Left cardiac atrium (tissue), 4 donors: ENCODE measurements at regions of chr11 and their contacts with region 1.

Region 1: DNA sequence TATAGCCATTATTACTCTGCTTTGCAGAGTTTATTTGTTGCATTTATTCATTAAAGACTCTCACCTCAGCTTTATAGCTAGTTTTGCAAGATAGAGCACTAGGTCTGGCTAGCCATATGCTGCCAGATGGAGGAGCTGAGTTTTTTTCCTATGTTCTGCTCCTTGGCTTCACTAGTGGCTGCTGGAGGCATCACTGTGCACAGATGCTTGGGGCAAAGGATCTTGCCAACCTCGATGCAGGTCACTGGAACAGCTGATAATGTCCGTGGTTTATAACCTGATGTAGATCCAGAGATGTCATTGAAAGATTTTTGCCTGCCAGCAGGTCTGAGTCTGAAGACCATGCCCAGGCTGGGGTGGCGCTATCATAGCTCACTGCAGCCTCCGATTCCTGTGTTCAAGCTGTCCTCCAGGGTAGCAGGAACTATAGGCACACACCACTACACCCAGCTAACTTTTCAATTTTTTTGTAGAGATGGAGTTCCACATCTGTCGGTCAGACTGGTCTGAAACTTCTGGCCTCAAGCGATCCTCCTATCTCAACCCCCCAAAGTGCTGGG is 63.2 kb downstream of the PACS1 start:
- DNase-seq: no peak
- ATAC-seq: no peak

Region 2: GRCh38 chr11:66069715-66070603 is 63.3 kb before region 1 on chr11 and contains the start of gene PACS1:
- intact Hi-C with region 1: loop called in 1 of 2 experiments (anchors 5 kb)
- DNase-seq: peak; percentile 90
- ATAC-seq: peak; percentile 88 to 90
- total RNA-seq, gene PACS1: 51.6 to 74.4 TPM

Region 3: GRCh38 chr11:66172143-66172542 is 38.8 kb after region 1 on chr11:
- intact Hi-C with region 1: no loop called
- DNase-seq: no peak
- ATAC-seq: peak in 1 of 2 donors; percentile 60

Region 4: GRCh38 chr11:66363805-66364535 is 230.7 kb after region 1 on chr11:
- intact Hi-C with region 1: no loop called
- DNase-seq: no peak
- ATAC-seq: peak; percentile 22 to 41